Activated B cell treated with CpG ODN at 0.5 μM for 24 hours (primary cell): ENCODE measurements at regions of chr1 and their contacts with region 1.

Region 1: DNA sequence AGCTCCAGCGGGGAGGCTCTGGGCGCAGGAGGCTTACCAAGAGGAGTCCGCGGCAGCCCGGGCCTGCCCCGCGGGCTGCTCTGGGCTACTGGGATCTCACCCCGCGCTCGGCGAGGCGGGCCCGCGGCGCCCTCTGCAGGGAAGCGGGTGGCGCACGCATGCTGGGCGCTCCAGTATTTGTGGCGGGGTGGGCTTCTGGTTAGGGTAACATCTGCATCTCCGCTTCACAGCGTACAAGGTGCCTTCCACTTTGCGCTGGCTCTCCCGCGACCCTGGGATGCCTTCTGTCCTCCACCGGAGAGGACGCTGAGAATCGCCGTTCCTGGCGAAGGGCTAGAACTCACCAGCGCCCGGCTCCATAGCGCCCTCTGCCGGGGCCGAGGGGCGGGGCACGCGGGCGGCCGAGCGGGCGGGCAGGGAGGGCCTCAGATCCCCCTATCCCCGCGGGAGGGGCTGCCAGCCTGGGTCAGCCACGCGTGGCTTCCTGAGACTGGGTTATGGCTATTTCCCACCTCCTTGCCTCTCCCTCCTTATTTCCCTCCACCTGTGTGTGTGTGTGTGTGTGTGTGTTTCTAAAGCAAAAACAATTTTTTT is 46.6 kb upstream of the CTBS start:
- DNase-seq: peak; percentile 91
- ATAC-seq: peak; percentile 93
- H3K4me3 Mint-ChIP-seq: peak overlapping the region; percentile 95
- H3K27ac Mint-ChIP-seq: peak overlapping the region; percentile 82
- H3K4me1 Mint-ChIP-seq: peaks cover 2% of the 10 kb centered on the region
- H3K27me3 Mint-ChIP-seq: peaks cover 8% of the 10 kb centered on the region
- CTCF ChIP-seq: peak; percentile 99

Region 2: DNA sequence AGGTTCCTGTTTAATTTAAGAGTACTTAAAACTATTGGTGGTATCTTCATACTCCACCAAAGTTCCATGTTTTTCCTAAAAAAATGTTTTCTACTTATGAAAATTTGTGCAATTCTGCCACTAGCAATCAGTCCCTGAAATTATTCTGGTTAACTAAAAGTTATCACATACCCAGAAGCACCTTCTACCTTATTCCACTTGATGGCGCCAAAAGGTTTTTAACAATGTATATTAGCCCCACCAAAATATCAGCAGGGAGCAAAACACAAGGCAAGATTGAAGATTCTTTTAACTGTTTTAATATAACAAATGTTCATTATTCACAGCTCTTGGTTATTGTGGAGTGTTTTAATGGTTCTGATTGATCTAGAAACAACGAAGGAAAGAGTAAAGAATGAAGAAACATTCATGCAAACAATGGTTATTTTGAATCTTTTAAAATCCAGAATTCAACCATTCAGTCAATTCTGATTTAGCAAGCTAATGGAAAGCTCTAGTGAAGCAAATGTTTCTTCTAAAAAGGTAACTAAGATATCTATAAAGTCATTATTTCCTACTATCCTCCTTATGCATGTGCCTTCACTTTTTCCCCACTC is 689.1 kb before region 1 on chr1:
- CTCF ChIA-PET with region 1: no interaction called
- POLR2A ChIA-PET with region 1: no interaction called
- intact Hi-C with region 1: loop called (anchors 1 kb)
- DNase-seq: no peak
- ATAC-seq: peak; percentile 61
- H3K4me3 Mint-ChIP-seq: no peak overlapping the region
- H3K27ac Mint-ChIP-seq: no peak overlapping the region
- H3K4me1 Mint-ChIP-seq: no peaks in the 10 kb centered on the region
- H3K27me3 Mint-ChIP-seq: no peaks in the 10 kb centered on the region
- CTCF ChIP-seq: no peak

Region 3: DNA sequence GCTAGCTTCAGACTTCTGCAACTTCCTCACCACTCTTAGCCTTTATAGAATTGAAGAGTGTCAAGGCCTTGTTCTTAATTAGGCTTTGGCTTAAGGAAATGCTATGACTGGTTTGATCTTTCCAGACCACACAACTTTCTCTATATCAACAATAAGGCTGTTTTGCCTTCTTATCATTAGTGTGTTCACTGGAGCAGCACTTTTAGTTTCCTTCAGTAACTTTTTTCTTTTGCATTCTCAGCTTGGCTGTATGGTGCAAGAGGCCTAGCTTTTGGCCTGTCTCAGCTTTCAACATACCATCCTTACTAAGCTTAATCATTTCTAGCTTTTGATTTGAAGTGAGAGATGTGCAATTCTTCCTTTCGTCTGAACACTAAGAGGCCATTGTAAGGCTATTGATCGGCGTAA is 468.2 kb before region 1 on chr1:
- CTCF ChIA-PET with region 1: no interaction called
- POLR2A ChIA-PET with region 1: no interaction called
- intact Hi-C with region 1: no loop called
- DNase-seq: no peak
- ATAC-seq: peak; percentile 64
- H3K4me3 Mint-ChIP-seq: peak overlapping the region; percentile 50
- H3K27ac Mint-ChIP-seq: peak overlapping the region; percentile 84
- H3K4me1 Mint-ChIP-seq: peaks cover 84% of the 10 kb centered on the region
- H3K27me3 Mint-ChIP-seq: no peaks in the 10 kb centered on the region
- CTCF ChIP-seq: no peak

Region 4: DNA sequence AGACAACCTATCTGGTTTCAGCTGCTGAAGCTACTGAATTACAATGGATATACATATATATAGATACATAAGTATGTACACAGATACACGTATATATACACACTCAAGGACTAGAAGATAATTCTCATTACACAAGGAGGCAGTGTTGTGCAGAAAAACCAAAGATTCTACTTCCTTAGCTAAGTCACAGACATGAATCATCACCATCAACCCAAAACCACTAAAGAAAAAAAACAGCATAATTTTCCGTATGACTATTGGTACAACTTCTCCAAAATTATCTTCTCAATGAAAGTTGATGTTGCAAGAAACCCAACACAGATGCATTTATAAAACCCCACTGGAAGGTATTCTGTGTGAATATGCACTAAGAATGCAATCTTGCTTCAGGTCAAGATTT is 178.6 kb before region 1 on chr1:
- CTCF ChIA-PET with region 1: interaction called, 25 read pairs
- POLR2A ChIA-PET with region 1: interaction called, 3 read pairs
- intact Hi-C with region 1: loop called (anchors 1 kb)
- DNase-seq: no peak
- ATAC-seq: peak; percentile 94
- H3K4me3 Mint-ChIP-seq: no peak overlapping the region
- H3K27ac Mint-ChIP-seq: peak overlapping the region; percentile 24
- H3K4me1 Mint-ChIP-seq: peaks cover 23% of the 10 kb centered on the region
- H3K27me3 Mint-ChIP-seq: peaks cover 5% of the 10 kb centered on the region
- CTCF ChIP-seq: no peak

Region 5: GRCh38 chr1:84506002-84506728 is 114.7 kb before region 1 on chr1 and contains the starts of genes GNG5 and SPATA1:
- CTCF ChIA-PET with region 1: interaction called, 3 read pairs
- POLR2A ChIA-PET with region 1: interaction called, 14 read pairs
- intact Hi-C with region 1: loop called (anchors 1 kb)
- DNase-seq: peak; percentile 98
- ATAC-seq: peak; percentile 87
- H3K4me3 Mint-ChIP-seq: peak within 1 kb of the TSS; percentile 96
- H3K27ac Mint-ChIP-seq: peak within 1 kb of the TSS; percentile 98
- H3K4me1 Mint-ChIP-seq: peaks cover 37% of the 10 kb centered on the region
- H3K27me3 Mint-ChIP-seq: no peaks in the 10 kb centered on the region
- CTCF ChIP-seq: no peak
- total RNA-seq, gene GNG5: 57.0 and 63.5 TPM in 2 replicates
- total RNA-seq, gene SPATA1: 4.6 and 4.7 TPM in 2 replicates

Region 6: DNA sequence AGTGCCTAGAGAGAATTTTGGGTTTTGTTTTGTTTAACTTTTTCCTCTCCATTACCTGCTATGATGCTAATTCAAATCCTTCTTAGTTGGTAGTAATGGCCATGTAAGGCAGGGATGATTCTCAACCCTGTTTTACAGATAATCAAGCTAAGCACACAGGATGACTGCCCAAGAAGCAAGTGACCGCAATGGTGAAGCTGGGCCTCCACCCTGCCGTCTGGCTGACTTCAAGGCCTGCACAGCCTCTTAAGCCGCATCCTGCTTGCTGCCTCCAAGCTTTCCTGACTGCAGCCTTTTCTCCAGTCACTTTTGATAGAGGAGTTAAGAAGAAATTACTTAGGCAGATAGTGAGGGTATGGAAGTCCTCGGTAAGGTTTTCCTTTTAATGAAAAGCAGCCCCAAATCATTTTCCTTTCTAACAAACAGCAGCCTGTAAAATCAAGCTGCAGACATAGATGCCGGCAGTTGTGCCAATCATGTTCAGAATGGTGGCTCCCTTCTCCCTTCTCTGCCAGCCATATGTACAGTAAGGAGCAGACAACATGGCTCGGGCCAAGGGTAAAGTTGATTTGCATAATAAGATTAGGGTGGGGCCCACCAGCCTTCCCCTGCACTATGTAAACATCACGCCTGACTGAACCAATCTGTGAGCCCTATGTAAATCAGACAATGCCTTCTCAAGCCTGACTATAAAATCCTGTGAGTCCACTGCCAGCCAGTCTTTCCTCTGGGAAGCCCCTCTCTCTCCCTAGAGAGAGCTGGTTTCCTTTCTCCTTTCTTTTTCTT is 37.8 kb before region 1 on chr1:
- CTCF ChIA-PET with region 1: interaction called, 4 read pairs
- POLR2A ChIA-PET with region 1: no interaction called
- intact Hi-C with region 1: loop called (anchors 2 kb)
- DNase-seq: no peak
- ATAC-seq: peak; percentile 88
- H3K4me3 Mint-ChIP-seq: peak overlapping the region; percentile 21
- H3K27ac Mint-ChIP-seq: peak overlapping the region; percentile 72
- H3K4me1 Mint-ChIP-seq: peaks cover 24% of the 10 kb centered on the region
- H3K27me3 Mint-ChIP-seq: no peaks in the 10 kb centered on the region
- CTCF ChIP-seq: no peak

Region 7: DNA sequence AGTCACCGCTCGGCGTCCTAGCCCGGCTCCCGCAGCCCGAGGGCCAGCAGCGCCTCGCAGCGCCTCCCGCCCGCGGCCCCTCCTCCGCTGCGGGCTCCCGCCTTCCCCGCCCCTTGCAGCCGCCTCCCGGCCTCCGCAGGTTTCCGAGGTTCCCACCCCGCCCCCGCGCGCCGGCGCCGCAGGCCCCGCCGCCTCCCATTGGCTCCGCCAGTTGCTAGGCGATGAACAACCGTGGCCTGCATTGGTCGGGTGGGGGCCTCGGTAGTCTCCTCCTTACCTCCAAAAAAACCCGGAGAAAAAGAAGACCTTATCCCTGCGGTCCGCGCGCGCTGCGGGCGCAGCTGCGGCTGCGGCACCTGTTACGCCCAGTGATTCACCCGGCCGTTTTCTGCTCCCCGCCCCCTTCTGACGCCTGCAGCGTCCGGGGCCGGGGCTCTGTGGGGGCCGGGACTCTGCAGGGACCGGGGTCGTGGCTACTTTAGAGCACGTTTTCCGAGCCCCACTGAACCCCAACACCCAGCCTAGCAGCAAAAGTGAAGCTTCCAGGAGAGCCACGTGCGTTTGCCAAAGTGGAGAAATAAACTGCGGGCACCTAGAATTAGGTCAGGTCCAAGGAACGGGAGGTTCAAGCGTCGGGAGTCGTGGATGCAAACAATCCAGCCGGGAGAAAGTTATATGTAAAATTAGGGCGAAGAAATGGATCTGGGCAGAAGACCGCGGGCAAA is 69.7 kb after region 1 on chr1 and contains the start of gene SSX2IP:
- CTCF ChIA-PET with region 1: no interaction called
- POLR2A ChIA-PET with region 1: no interaction called
- intact Hi-C with region 1: loop called (anchors 1 kb)
- DNase-seq: peak; percentile 100
- ATAC-seq: peak; percentile 86
- H3K4me3 Mint-ChIP-seq: peak within 1 kb of the TSS; percentile 91
- H3K27ac Mint-ChIP-seq: peak within 1 kb of the TSS; percentile 89
- H3K4me1 Mint-ChIP-seq: peaks cover 32% of the 10 kb centered on the region
- H3K27me3 Mint-ChIP-seq: no peaks in the 10 kb centered on the region
- CTCF ChIP-seq: no peak
- total RNA-seq, gene SSX2IP: 4.5 and 5.4 TPM in 2 replicates

Region 8: DNA sequence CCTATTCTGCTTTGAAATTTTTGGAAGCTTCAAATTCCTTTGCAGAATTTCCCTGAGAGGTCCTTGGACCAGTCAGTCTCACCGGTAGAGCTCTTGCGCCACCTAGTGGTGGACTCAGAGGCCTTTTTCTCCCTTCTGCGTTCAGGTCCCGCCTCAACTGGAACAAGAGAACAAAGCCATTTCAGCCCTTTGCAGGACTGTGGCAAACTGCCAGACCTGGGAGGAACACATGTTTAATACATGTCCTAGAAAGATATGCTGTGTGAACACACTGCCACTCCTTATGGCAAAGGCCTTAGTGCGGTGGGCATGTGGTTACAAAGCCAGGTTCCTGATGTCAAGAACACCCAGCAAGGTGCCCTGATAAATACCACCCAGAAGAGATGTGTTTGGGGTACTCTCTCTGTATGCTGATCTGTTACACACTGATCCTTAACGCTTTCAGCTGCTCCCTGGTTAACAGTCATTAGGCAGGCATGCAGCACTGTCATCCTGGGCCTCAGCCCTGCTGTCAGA is 151.7 kb after region 1 on chr1:
- CTCF ChIA-PET with region 1: interaction called, 3 read pairs
- POLR2A ChIA-PET with region 1: no interaction called
- intact Hi-C with region 1: loop called (anchors 5 kb)
- DNase-seq: peak; percentile 58
- ATAC-seq: peak; percentile 71
- H3K4me3 Mint-ChIP-seq: no peak overlapping the region
- H3K27ac Mint-ChIP-seq: no peak overlapping the region
- H3K4me1 Mint-ChIP-seq: no peaks in the 10 kb centered on the region
- H3K27me3 Mint-ChIP-seq: peaks cover 5% of the 10 kb centered on the region
- CTCF ChIP-seq: peak; percentile 43